Mucosa of descending colon (tissue), 3 donors: ENCODE measurements at regions of chr7 and their contacts with region 1.

Region 1: DNA sequence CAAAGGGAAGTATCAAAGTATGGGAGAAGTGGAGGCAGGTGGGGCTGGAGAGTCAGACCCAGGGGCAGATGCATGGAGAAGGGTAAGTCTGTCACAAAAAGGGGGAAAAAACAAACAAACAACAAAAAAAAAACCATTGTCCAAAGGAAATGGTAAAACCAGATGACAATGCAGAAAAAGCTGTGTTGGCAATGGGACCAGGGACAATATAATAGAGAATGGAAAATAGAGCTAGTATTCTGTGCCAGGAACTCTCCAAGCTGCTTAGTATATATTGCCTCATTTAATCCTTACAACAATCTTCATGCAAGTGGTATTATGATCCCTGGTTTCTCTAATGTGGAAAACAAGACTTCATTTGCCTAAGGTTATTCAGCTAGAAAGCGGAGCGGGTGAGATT is 13.1 kb upstream of the KDM7A start:
- DNase-seq: no peak
- ATAC-seq: no peak
- H3K4me3 ChIP-seq: no peak overlapping the region
- H3K4me1 ChIP-seq: no peaks in the 10 kb centered on the region
- CTCF ChIP-seq: no peak

Region 2: DNA sequence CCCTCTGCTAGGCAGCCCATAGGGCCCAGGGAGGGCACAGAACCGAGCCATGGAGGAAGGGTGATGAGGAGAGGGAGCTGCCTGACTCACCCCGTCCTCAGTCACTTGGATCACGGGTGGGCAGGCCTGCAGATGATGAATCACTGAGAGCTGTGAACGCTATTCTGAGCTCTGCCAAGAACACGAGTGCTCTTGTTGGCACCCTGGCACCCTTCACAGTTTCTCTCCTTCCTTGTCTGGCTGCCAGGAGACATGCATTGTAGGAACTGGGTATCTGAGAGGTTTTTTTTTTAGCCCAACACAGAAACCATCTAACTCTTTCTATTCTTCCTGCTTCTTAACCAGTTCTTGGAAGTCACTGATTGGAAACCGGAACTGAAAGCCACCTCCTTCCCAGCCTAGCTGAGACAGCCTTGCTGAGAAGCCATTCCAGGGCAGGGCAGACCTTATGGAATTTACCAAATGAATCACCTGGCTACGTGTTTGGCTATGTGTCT is 126.3 kb after region 1 on chr7:
- intact Hi-C with region 1: loop called in 1 of 2 experiments (anchors 10 kb)
- DNase-seq: peak; percentile 54 to 70 (median 67)
- ATAC-seq: peak; percentile 94
- H3K4me3 ChIP-seq: no peak overlapping the region
- H3K4me1 ChIP-seq: peaks cover 18% of the 10 kb centered on the region
- CTCF ChIP-seq: no peak